Caco-2 (cell line): ENCODE measurements at regions of chr4 and their contacts with region 1.

Region 1: GRCh38 chr4:106266201-106266600 is 49.8 kb downstream of the TBCK start:
- DNase-seq: peak in 1 of 2 experiments; percentile 57
- H3K4me3 ChIP-seq: no peak overlapping the region
- H3K4me3 Mint-ChIP-seq: no peak overlapping the region
- H3K27ac Mint-ChIP-seq: no peak overlapping the region
- H3K4me1 ChIP-seq: peaks cover 69% of the 10 kb centered on the region
- H3K4me1 Mint-ChIP-seq: peaks cover 42% of the 10 kb centered on the region
- H3K27me3 ChIP-seq: no peaks in the 10 kb centered on the region
- H3K27me3 Mint-ChIP-seq: no peaks in the 10 kb centered on the region
- CTCF ChIP-seq: peak; percentile 43 to 60

Region 2: GRCh38 chr4:106305435-106306055 is 39.3 kb after region 1 on chr4:
- CTCF ChIA-PET with region 1: interaction called, 5 read pairs
- POLR2A ChIA-PET with region 1: interaction called, 5 read pairs
- intact Hi-C with region 1: loop called (anchors 1 kb)
- DNase-seq: no peak
- H3K4me3 ChIP-seq: no peak overlapping the region
- H3K4me3 Mint-ChIP-seq: peak overlapping the region; percentile 41
- H3K27ac Mint-ChIP-seq: peak overlapping the region; percentile 89
- H3K4me1 ChIP-seq: peaks cover 75% of the 10 kb centered on the region
- H3K4me1 Mint-ChIP-seq: peaks cover 68% of the 10 kb centered on the region
- H3K27me3 ChIP-seq: no peaks in the 10 kb centered on the region
- H3K27me3 Mint-ChIP-seq: no peaks in the 10 kb centered on the region
- CTCF ChIP-seq: no peak

Region 3: DNA sequence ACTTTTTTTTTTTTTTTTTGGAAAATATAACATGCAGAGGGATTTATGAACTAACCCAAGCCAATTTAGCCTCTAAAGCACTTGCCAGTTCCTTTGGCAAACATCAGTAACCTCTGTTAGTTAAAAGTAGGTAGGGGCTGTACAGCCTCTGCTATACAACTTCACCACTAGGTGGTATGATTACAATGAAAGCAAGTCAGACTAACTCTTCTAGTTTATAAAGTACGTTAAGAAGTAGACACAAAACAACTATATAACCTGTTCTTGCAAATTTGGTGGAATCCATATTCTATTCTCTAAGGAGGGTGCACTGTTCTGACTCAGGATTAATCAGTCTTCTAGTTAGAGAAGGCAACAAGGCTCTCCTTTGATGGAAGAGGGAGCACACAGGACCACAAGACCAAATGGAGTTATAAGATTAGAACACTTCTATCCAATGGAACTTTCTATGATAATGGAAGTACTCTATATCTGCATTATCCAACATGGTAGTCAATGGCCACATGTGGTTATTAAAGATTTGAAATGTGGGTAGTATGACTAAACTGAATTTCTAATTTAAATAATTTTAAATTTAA is 62.9 kb after region 1 on chr4:
- CTCF ChIA-PET with region 1: interaction called, 3 read pairs
- POLR2A ChIA-PET with region 1: no interaction called
- intact Hi-C with region 1: loop called (anchors 2 kb)
- DNase-seq: peak in 1 of 2 experiments; percentile 50
- H3K4me3 ChIP-seq: no peak overlapping the region
- H3K4me3 Mint-ChIP-seq: no peak overlapping the region
- H3K27ac Mint-ChIP-seq: no peak overlapping the region
- H3K4me1 ChIP-seq: peaks cover 5% of the 10 kb centered on the region
- H3K4me1 Mint-ChIP-seq: peaks cover 6% of the 10 kb centered on the region
- H3K27me3 ChIP-seq: no peaks in the 10 kb centered on the region
- H3K27me3 Mint-ChIP-seq: no peaks in the 10 kb centered on the region
- CTCF ChIP-seq: peak; percentile 44 to 71

Region 4: DNA sequence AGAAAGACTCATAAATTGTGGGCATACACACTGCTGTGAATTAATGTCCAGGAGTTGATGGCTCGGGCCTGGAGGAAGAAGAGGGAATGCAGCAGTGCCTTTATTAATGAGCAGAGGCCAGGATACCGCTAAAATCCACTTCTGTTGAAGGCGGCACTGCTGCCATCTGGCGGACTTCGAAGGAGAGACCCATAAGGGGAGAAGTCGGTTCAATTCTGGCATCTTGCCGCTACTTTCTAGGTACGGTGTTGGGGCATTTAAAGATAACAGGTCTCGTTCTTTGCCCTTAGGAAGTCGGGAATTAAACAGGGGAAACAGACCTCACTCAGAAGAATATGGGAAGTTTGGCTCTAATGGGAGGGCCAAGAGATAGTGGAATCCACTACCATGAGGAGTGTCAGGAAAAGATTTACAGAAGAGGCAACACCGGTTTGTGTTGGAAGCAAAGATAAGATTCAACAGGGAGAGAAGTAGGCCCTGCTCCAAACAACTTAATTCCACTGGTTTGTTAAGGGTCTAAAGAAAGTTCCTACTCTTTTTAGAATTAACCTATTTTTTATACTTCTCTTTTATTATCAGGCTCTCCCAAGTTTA is 236.0 kb after region 1 on chr4:
- CTCF ChIA-PET with region 1: no interaction called
- POLR2A ChIA-PET with region 1: no interaction called
- intact Hi-C with region 1: loop called (anchors 1 kb)
- DNase-seq: peak; percentile 28 to 53
- H3K4me3 ChIP-seq: no peak overlapping the region
- H3K4me3 Mint-ChIP-seq: no peak overlapping the region
- H3K27ac Mint-ChIP-seq: no peak overlapping the region
- H3K4me1 ChIP-seq: peaks cover 6% of the 10 kb centered on the region; the same call in 1 of the 2 replicates
- H3K4me1 Mint-ChIP-seq: no peaks in the 10 kb centered on the region
- H3K27me3 ChIP-seq: no peaks in the 10 kb centered on the region
- H3K27me3 Mint-ChIP-seq: no peaks in the 10 kb centered on the region
- CTCF ChIP-seq: peak; percentile 16 to 34

Region 5: GRCh38 chr4:106601519-106601918 is 335.3 kb after region 1 on chr4:
- CTCF ChIA-PET with region 1: interaction called, 3 read pairs
- POLR2A ChIA-PET with region 1: no interaction called
- intact Hi-C with region 1: loop called (anchors 10 kb)
- DNase-seq: peak in 1 of 2 experiments; percentile 35
- H3K4me3 ChIP-seq: no peak overlapping the region
- H3K4me3 Mint-ChIP-seq: peak overlapping the region; percentile 9
- H3K27ac Mint-ChIP-seq: peak overlapping the region; percentile 67
- H3K4me1 ChIP-seq: peaks cover 35% of the 10 kb centered on the region
- H3K4me1 Mint-ChIP-seq: peaks cover 6% of the 10 kb centered on the region
- H3K27me3 ChIP-seq: no peaks in the 10 kb centered on the region
- H3K27me3 Mint-ChIP-seq: no peaks in the 10 kb centered on the region
- CTCF ChIP-seq: no peak

Region 6: GRCh38 chr4:106659371-106659770 is 393.2 kb after region 1 on chr4:
- CTCF ChIA-PET with region 1: no interaction called
- POLR2A ChIA-PET with region 1: no interaction called
- intact Hi-C with region 1: no loop called
- DNase-seq: no peak
- H3K4me3 ChIP-seq: no peak overlapping the region
- H3K4me3 Mint-ChIP-seq: no peak overlapping the region
- H3K27ac Mint-ChIP-seq: no peak overlapping the region
- H3K4me1 ChIP-seq: no peaks in the 10 kb centered on the region
- H3K4me1 Mint-ChIP-seq: no peaks in the 10 kb centered on the region
- H3K27me3 ChIP-seq: no peaks in the 10 kb centered on the region
- H3K27me3 Mint-ChIP-seq: no peaks in the 10 kb centered on the region
- CTCF ChIP-seq: no peak

Region 7: DNA sequence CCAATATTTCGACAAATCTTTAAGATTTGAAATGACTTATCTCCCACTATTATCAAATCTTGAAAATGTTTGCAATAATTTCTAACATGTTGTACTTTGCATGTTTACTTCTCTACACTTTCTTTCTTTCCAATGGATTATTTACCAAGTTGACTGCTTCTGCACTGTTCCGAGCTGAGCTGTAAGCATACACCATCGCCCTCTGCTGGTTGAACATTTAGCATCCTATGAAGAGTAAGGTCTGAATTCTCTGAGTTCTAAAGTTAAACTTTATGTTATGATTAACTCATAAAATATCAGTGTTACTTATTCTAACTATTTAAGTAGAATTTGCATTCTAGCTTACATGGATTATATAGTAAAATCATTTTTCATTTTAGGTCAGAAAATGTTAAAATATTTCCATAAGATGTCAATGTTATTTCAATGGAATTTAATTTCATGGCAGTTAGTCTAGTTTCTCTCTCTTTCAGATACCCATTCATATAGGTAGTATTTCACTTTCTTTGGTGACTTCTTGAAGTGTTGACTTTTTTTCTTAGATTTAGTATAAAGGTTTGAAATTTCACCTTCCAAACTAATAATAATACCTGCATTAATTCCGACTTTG is 632.5 kb after region 1 on chr4:
- CTCF ChIA-PET with region 1: no interaction called
- POLR2A ChIA-PET with region 1: no interaction called
- intact Hi-C with region 1: loop called (anchors 1 kb)
- DNase-seq: peak; percentile 38 to 57
- H3K4me3 ChIP-seq: no peak overlapping the region
- H3K4me3 Mint-ChIP-seq: no peak overlapping the region
- H3K27ac Mint-ChIP-seq: no peak overlapping the region
- H3K4me1 ChIP-seq: no peaks in the 10 kb centered on the region
- H3K4me1 Mint-ChIP-seq: peaks cover 6% of the 10 kb centered on the region
- H3K27me3 ChIP-seq: no peaks in the 10 kb centered on the region
- H3K27me3 Mint-ChIP-seq: peaks cover 4% of the 10 kb centered on the region
- CTCF ChIP-seq: peak; percentile 67 to 68